ENCODE measurements at regions of chr5 and their contacts with region 1.

Region 1: GRCh38 chr5:116420540-116420939 is 154.1 kb downstream of the SEMA6A start:
- DNase-seq: peak; percentile 18 to 52
- ATAC-seq: peak; percentile 62 to 96 (median 90)
- H3K4me3 ChIP-seq: no peak overlapping the region
- H3K27ac ChIP-seq: peak overlapping the region in 3 of 10 donors; percentile 24 to 65 (median 59)
- H3K4me1 ChIP-seq: peaks cover 0 to 21% (median 11%) of the 10 kb centered on the region in 9 donors
- H3K27me3 ChIP-seq: no peaks in the 10 kb centered on the region
- CTCF ChIP-seq: no peak

Region 2: GRCh38 chr5:116404016-116404415 is 16.5 kb before region 1 on chr5:
- intact Hi-C with region 1: loop called in 1 of 10 experiments (anchors 2 kb)
- DNase-seq: no peak
- ATAC-seq: peak in 6 of 8 donors; percentile 74 to 88 (median 82)
- H3K4me3 ChIP-seq: no peak overlapping the region
- H3K27ac ChIP-seq: peak overlapping the region in 2 of 10 donors; percentile 18 to 34
- H3K4me1 ChIP-seq: peaks cover 0 to 22% (median 9%) of the 10 kb centered on the region in 9 donors
- H3K27me3 ChIP-seq: no peaks in the 10 kb centered on the region
- CTCF ChIP-seq: no peak

Region 3: DNA sequence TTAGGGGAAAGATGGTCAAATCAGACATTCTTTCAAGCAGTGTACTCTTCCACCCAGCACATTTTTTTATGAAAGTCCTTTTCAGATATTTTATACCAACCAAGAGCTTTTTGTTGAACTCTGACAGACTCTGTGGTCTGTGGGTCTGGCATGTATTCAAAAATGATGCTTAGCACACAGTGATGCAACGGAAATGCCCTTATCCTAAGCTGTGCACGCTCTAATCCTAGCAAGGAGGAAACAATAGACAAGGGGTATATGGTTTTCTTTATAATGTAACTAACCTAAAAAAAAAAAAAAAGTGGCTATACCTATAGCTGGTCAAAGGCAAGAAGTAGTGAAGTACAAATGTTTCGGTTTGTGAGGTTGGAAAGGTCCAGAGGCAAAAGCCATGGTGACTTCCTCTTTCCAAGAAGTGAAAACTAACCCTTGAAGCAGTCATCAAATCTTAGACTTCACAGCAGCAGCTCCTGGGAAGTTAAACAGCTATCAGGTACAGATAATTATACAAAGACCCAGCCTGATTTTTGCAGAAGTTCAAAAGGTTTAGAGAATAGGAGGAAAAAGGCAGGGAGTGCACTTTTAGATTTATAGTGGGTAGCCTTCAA is 71.6 kb after region 1 on chr5:
- intact Hi-C with region 1: no loop called
- DNase-seq: no peak
- ATAC-seq: peak in 7 of 8 donors; percentile 36 to 66 (median 58)
- H3K4me3 ChIP-seq: no peak overlapping the region
- H3K27ac ChIP-seq: peak overlapping the region in 5 of 10 donors; percentile 7 to 56 (median 24)
- H3K4me1 ChIP-seq: peaks cover 0 to 22% (median 11%) of the 10 kb centered on the region in 9 donors
- H3K27me3 ChIP-seq: no peaks in the 10 kb centered on the region
- CTCF ChIP-seq: no peak